ENCODE measurements at regions of chr11 and their contacts with region 1.

Region 1: GRCh38 chr11:66222358-66223149 is 45.9 kb upstream of the RAB1B start:
- DNase-seq: peak; percentile 86 to 92 (median 89)
- ATAC-seq: peak; percentile 74 to 90 (median 86)
- H3K4me3 ChIP-seq: peak overlapping the region in 1 of 12 donors; percentile 16
- H3K27ac ChIP-seq: no peak overlapping the region
- H3K4me1 ChIP-seq: peaks cover 0 to 7% (median 0%) of the 10 kb centered on the region in 12 donors
- H3K27me3 ChIP-seq: no peaks in the 10 kb centered on the region
- CTCF ChIP-seq: peak; percentile 98 to 100 (median 99)
- POLR2A ChIP-seq: no peak

Region 2: GRCh38 chr11:66172143-66172542 is 50.4 kb before region 1 on chr11:
- intact Hi-C with region 1: no loop called
- DNase-seq: no peak
- ATAC-seq: no peak
- H3K4me3 ChIP-seq: no peak overlapping the region
- H3K27ac ChIP-seq: no peak overlapping the region
- H3K4me1 ChIP-seq: no peaks in the 10 kb centered on the region
- H3K27me3 ChIP-seq: no peaks in the 10 kb centered on the region
- CTCF ChIP-seq: no peak
- POLR2A ChIP-seq: no peak

Region 3: DNA sequence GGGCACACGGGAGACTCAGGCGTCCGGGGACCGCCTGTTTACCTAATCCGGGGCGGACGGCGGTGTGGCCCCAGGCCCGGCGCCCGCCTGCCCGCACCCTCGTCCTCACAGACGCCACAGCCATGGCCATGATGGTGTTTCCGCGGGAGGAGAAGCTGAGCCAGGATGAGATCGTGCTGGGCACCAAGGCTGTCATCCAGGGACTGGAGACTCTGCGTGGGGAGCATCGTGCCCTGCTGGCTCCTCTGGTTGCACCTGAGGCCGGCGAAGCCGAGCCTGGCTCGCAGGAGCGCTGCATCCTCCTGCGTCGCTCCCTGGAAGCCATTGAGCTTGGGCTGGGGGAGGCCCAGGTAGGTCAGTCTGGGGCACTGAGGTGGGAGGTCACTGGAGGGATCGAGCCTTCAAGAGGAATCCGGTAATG is 35.9 kb after region 1 on chr11:
- intact Hi-C with region 1: loop called in 7 of 10 experiments (anchors 1 to 2 kb)
- DNase-seq: no peak
- ATAC-seq: peak in 1 of 4 donors; percentile 0
- H3K4me3 ChIP-seq: peak overlapping the region; percentile 33 to 99 (median 90)
- H3K27ac ChIP-seq: peak overlapping the region in 10 of 12 donors; percentile 66 to 89 (median 82)
- H3K4me1 ChIP-seq: peaks cover 0 to 17% (median 12%) of the 10 kb centered on the region in 12 donors
- H3K27me3 ChIP-seq: peaks cover 0 to 7% (median 0%) of the 10 kb centered on the region in 9 donors
- CTCF ChIP-seq: peak in 6 of 12 donors; percentile 0 to 31 (median 18)
- POLR2A ChIP-seq: no peak

Region 4: DNA sequence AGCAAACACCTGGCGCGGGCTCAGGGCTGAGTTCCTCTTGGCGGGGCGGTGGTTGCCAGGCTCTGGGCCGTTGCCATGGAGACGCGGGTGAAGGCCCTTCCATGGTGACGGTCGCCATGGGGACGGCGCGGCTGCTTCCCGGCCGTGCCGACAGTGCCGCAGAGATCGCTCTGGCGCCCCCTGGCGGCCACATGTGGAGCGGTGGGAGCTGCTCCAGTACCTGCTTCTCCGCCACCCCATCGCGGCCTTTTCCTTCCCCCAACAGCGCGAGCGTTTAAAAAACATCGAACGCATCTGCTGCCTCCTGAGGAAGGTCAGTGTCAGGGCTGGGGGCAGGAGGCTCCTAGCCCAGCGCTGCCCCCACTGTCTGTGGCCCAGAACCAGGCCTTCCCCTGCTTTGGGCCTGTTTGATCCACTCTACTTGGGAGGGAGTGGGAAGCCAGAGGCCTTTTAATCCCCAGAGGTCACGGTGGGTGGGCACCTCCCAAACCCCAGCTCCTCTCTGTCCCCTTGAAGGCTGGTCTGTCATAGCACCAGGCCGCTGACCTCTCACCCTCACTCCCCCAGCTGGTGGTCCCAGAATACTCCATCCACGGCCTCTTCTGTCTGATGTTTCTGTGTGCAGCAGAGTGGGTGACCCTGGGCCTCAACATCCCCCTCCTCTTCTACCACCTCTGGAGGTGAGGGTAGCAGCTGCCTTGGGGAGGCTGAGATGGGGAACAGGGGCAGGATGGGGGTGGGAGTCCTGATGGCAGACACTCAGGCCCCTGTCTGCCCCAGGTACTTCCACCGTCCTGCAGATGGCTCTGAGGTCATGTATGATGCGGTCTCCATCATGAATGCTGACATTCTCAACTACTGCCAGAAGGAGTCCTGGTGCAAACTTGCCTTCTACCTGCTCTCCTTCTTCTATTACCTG is 60.2 kb after region 1 on chr11:
- intact Hi-C with region 1: loop called in 9 of 10 experiments (anchors 1 to 10 kb)
- DNase-seq: peak; percentile 96 to 99 (median 97)
- ATAC-seq: peak; percentile 75 to 87 (median 82)
- H3K4me3 ChIP-seq: no peak overlapping the region
- H3K27ac ChIP-seq: no peak overlapping the region
- H3K4me1 ChIP-seq: peaks cover 0 to 48% (median 28%) of the 10 kb centered on the region in 12 donors
- H3K27me3 ChIP-seq: no peaks in the 10 kb centered on the region
- CTCF ChIP-seq: peak; percentile 96 to 100 (median 98)
- POLR2A ChIP-seq: no peak

Region 5: GRCh38 chr11:67062308-67063063 is 839.9 kb after region 1 on chr11:
- intact Hi-C with region 1: no loop called
- DNase-seq: no peak
- ATAC-seq: no peak
- H3K4me3 ChIP-seq: no peak overlapping the region
- H3K27ac ChIP-seq: no peak overlapping the region
- H3K4me1 ChIP-seq: peaks cover 0 to 18% (median 2%) of the 10 kb centered on the region in 12 donors
- H3K27me3 ChIP-seq: peaks cover 0 to 3% (median 0%) of the 10 kb centered on the region in 9 donors
- CTCF ChIP-seq: no peak
- POLR2A ChIP-seq: no peak

Measured in heart left ventricle (tissue), 16 donors.